ENCODE measurements at regions of chr2 and their contacts with region 1.

Region 1: DNA sequence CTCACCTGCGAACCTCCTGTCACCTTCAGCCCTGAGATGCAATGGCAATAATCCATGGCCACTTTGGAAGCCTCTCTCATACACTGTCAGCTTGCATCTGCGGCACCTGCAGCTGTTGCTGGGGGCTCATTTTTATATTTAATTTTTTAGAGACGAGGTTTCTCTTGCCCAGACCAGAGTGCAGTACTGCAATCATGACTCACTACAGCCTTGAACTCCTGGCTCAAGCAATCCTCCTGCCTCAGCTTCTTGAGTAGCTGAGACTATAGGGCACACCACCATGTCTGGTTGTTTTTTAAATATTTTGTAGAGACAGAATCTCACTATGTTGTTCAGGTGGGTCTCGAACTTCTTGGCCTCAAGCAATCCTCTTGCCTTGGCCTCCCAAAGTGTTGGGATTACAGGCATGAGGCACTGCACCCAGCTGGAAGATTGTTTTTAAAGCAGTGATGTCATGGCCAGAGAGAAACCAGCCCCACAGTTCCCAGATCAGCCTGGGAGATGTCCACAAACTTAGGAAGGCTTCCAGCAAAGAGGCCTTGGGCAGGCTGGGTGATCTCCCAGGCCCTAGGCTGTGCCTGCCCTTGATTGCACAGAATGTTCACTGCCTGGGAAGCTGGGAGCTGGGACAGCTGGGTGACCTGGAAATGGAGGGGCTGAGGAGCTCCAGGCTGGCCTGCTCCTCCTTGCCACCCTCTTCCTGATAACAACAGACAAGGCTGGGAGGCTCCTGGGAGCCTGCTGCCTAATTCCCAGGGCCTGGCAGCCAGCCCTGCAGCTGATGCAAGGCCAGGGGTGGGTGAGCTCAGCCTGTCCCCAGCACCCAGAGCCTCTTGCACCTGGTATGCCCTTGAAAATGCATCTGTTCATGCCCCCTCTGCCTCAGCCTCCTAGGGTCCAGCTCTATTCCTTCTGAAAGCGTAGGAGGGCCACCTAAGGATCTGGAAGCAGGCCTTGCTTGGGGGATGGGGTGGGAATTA is 27.1 kb downstream of the SH2D6 start:
- H3K4me3 Mint-ChIP-seq: no peak overlapping the region
- H3K27ac Mint-ChIP-seq: no peak overlapping the region
- H3K4me1 Mint-ChIP-seq: peaks cover 36% of the 10 kb centered on the region
- H3K27me3 Mint-ChIP-seq: no peaks in the 10 kb centered on the region

Region 2: GRCh38 chr2:85524336-85524933 is 78.8 kb after region 1 on chr2:
- intact Hi-C with region 1: loop called (anchors 5 kb)
- H3K4me3 Mint-ChIP-seq: peak overlapping the region; percentile 30
- H3K27ac Mint-ChIP-seq: peak overlapping the region; percentile 87
- H3K4me1 Mint-ChIP-seq: peaks cover 39% of the 10 kb centered on the region
- H3K27me3 Mint-ChIP-seq: no peaks in the 10 kb centered on the region

Measured in dendritic cell treated with granulocyte-macrophage colony-stimulating factor and Interleukin-4, amounts not matched to agents 40 ng/mL and 50 ng/mL, for 4 days (primary cell).